Heart left ventricle (tissue), 16 donors: ENCODE measurements at regions of chr10 and their contacts with region 1.

Region 1: DNA sequence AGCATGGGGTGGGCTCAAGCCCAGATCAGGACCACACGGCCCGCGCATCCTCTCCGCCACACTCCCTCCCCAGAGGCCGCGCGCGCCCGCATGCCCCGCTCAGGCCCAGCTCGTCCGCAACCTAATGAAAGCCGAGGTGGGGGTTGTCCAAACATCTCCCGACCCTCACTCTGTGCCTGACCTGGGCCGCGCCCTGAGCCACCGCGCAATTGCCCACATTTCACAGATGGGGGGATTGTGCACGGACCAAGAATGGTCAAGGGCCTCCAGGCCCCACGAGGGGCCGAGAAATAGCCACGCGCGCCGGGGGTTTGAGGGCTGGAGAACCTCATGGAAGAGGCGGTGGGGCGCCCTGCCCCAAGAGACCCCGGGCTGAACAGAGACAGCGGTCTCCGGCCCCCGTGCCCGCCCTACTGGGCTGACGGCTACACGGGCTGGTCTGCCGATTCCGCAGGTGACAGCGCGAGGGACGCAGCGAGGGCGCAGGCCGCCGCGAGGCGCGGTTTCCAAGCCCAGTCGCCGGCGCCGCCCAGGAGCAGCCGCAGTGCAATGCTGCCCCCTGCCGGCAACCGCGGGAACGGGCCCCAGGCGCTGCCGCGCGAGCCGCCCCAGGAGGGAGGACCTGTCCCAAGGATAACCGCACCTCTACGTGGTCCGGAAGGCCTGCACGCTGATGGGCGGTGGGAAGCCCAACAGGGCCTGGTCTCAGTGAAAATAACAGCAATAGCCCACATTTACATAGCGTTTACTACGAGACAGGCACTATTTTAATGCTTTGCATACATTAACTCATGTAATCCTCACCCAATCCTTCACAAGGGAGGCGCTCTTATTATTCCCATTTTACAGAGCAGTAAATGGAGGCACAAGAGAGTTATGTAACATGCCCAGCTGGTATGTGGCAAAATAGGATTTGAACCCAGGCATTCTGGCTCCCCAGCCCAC is 10.5 kb upstream of the GRID1 start:
- DNase-seq: peak; percentile 63 to 90 (median 70)
- ATAC-seq: peak; percentile 37 to 92 (median 86)
- H3K4me3 ChIP-seq: peak overlapping the region in 8 of 12 donors; percentile 9 to 47 (median 31)
- H3K27ac ChIP-seq: no peak overlapping the region
- H3K4me1 ChIP-seq: peaks cover 0 to 8% (median 4%) of the 10 kb centered on the region in 12 donors
- H3K27me3 ChIP-seq: peaks cover 0 to 67% (median 19%) of the 10 kb centered on the region in 9 donors
- CTCF ChIP-seq: peak; percentile 96 to 100 (median 100)
- POLR2A ChIP-seq: no peak

Region 2: DNA sequence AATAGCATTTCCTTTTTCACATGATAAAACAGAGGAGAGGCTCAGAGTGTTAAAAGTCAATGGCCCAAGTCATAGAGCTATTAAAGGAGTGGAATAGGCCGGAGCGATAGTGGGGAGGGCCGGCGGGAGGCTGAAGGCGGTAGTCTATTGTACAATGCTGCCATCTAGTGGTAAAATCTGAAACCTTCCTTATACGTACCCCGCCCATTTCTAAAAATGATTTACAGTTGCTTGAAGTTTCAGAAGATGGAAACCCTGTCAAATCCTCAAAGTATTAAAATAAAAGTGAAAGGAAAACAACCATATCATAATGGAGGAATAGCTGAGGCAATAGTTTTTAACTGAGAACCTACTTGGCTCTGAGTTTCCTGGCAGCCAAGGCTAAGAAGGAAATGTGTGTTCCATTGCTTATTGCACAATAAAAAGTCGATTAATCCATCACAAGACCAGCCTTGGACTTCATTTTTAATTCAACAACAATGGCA is 1839.6 kb before region 1 on chr10:
- intact Hi-C with region 1: loop called in 8 of 10 experiments (anchors 5 to 10 kb)
- DNase-seq: peak in 3 of 5 donors; percentile 36 to 58 (median 50)
- ATAC-seq: peak; percentile 85 to 93 (median 92)
- H3K4me3 ChIP-seq: no peak overlapping the region
- H3K27ac ChIP-seq: no peak overlapping the region
- H3K4me1 ChIP-seq: peaks cover 0 to 14% (median 4%) of the 10 kb centered on the region in 12 donors
- H3K27me3 ChIP-seq: peaks cover 6 to 36% (median 21%) of the 10 kb centered on the region in 9 donors
- CTCF ChIP-seq: peak; percentile 79 to 95 (median 84)
- POLR2A ChIP-seq: no peak

Region 3: DNA sequence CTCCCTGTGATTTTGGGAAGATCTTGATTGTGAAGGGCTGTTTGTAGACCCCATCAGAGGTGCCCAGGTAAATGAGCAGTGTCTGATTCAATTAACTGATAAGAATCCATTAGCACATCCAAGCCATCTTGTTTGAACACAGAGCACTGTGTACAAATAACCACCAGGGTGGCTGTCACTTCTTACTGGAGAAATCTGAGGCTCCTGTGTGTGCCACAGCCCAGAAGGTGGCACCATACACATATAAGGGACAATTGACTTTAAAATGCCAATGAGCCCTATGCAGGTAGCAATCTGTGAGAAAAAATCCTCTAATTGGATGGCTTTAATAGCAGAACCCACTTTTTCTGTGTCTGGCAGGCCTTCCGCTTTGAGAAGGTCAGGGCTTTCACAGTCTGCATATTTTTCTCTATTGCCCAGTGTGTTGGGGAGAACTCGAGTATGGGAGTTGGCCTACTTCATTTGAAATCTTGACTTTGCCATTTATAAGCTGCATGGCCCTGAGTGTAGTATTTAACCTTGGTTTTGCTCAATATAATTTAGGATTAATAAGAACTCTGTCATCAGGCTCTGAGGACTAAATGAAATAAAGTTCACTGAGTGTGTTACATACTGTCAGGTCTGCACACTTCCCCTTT is 1531.4 kb before region 1 on chr10:
- intact Hi-C with region 1: loop called in 1 of 10 experiments (anchors 5 kb)
- DNase-seq: peak in 1 of 5 donors; percentile 31
- ATAC-seq: peak; percentile 66 to 78 (median 70)
- H3K4me3 ChIP-seq: no peak overlapping the region
- H3K27ac ChIP-seq: no peak overlapping the region
- H3K4me1 ChIP-seq: peaks cover 0 to 13% (median 0%) of the 10 kb centered on the region in 12 donors
- H3K27me3 ChIP-seq: no peaks in the 10 kb centered on the region
- CTCF ChIP-seq: peak in 11 of 12 donors; percentile 32 to 58 (median 45)
- POLR2A ChIP-seq: no peak

Region 4: GRCh38 chr10:84938117-84938905 is 1438.8 kb before region 1 on chr10:
- intact Hi-C with region 1: loop called in 1 of 10 experiments (anchors 10 kb)
- DNase-seq: peak in 1 of 5 donors; percentile 34
- ATAC-seq: peak; percentile 52 to 83 (median 74)
- H3K4me3 ChIP-seq: no peak overlapping the region
- H3K27ac ChIP-seq: no peak overlapping the region
- H3K4me1 ChIP-seq: peaks cover 0 to 10% (median 0%) of the 10 kb centered on the region in 12 donors
- H3K27me3 ChIP-seq: no peaks in the 10 kb centered on the region
- CTCF ChIP-seq: no peak
- POLR2A ChIP-seq: no peak

Region 5: DNA sequence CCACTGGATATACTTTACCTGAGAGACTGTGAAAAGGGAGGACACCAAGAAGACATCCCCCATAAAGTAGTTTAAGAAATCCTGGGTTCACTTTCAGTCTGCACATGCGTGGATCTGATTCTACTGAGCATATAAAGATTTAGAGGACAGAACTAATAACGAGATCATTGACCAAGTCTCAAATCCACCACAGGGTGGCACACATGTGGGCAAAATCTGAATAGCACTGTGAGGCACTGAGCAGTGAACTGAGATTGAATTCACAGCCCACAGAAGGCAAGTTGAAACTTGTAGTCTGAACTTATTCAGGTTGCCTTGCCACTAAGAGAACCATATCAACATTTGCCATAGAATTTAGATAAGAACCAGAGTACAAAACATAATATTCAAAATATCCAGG is 829.1 kb before region 1 on chr10:
- intact Hi-C with region 1: loop called in 8 of 10 experiments (anchors 2 to 10 kb)
- DNase-seq: no peak
- ATAC-seq: peak in 3 of 4 donors; percentile 28 to 59 (median 54)
- H3K4me3 ChIP-seq: no peak overlapping the region
- H3K27ac ChIP-seq: no peak overlapping the region
- H3K4me1 ChIP-seq: no peaks in the 10 kb centered on the region
- H3K27me3 ChIP-seq: peaks cover 0 to 4% (median 0%) of the 10 kb centered on the region in 9 donors
- CTCF ChIP-seq: peak in 11 of 12 donors; percentile 19 to 52 (median 35)
- POLR2A ChIP-seq: no peak

Region 6: DNA sequence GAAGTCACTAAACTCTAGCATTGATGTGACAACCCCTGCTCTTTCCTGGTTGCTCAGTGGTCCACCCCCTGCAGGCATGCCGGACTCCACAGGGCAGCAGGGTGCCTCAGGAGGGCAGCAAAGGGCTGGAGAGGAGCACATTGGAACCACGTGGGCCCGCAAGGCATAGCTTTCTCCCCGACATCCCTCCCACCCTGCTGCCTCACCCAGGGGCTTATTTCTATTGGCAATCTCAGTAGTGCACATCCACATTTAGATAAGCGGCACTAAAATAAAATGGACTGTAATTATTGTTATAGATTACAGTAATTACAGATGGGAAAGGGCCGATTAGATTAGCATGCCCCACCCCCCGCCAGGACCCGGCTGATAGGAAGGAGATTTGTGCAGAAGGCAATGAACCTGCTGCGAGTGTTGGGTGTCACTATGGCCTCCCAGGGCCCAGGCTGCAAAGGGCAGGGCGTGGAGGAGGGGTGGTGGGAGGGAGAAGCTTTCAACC is 590.7 kb before region 1 on chr10:
- intact Hi-C with region 1: loop called in 8 of 10 experiments (anchors 2 to 10 kb)
- DNase-seq: peak in 1 of 5 donors; percentile 41
- ATAC-seq: peak in 3 of 4 donors; percentile 65 to 80 (median 67)
- H3K4me3 ChIP-seq: no peak overlapping the region
- H3K27ac ChIP-seq: no peak overlapping the region
- H3K4me1 ChIP-seq: peaks cover 0 to 5% (median 0%) of the 10 kb centered on the region in 12 donors
- H3K27me3 ChIP-seq: no peaks in the 10 kb centered on the region
- CTCF ChIP-seq: peak; percentile 15 to 59 (median 36)
- POLR2A ChIP-seq: no peak

Region 7: GRCh38 chr10:85995791-85996190 is 381.3 kb before region 1 on chr10:
- intact Hi-C with region 1: loop called in 3 of 10 experiments (anchors 5 to 10 kb)
- DNase-seq: no peak
- ATAC-seq: peak in 1 of 4 donors; percentile 55
- H3K4me3 ChIP-seq: no peak overlapping the region
- H3K27ac ChIP-seq: no peak overlapping the region
- H3K4me1 ChIP-seq: no peaks in the 10 kb centered on the region
- H3K27me3 ChIP-seq: peaks cover 0 to 4% (median 0%) of the 10 kb centered on the region in 9 donors
- CTCF ChIP-seq: peak in 11 of 12 donors; percentile 11 to 50 (median 39)
- POLR2A ChIP-seq: no peak